Left cardiac atrium (tissue), 4 donors: ENCODE measurements at regions of chr3 and their contacts with region 1.

Region 1: DNA sequence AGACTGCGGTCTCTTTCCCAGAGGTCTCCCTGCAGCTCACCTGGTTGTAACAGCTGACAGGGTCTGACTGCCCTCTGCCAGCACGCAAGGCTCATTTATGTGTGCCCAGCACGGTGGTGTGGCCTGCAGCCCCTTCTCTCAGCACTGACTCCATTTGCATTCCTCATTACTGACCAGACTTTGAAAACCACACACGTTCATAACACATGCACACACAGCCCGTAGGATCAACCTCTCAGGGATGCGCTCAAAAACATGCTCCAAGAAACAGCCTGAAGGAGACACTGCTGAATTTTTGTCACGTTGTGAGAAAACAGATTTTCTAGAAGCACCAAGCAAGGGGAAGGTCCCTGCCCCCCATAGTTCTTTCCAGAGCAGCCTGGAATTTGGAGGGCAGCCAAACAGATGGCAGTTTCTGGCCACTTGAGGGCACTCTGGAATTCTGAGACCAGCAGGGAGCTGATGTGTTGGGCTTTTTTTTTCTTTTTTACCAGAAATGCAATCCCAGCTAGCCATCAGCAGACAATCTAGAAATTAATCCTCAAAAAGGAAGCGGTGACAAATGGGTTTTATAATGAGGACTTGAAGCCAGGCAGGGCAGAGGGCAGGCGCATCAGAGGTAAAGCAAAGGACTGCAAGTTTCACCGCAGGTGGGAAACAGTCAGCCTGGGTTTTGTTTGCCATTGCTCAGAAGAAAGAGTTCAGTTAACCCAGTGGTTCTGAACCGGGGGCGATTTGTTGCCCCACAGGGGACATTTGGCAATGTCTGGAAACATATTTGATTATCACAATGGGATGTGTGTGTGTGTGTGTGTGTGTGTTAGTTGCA is 170.5 kb upstream of the PROK2 start:
- DNase-seq: peak; percentile 76
- ATAC-seq: peak; percentile 79 to 81

Region 2: DNA sequence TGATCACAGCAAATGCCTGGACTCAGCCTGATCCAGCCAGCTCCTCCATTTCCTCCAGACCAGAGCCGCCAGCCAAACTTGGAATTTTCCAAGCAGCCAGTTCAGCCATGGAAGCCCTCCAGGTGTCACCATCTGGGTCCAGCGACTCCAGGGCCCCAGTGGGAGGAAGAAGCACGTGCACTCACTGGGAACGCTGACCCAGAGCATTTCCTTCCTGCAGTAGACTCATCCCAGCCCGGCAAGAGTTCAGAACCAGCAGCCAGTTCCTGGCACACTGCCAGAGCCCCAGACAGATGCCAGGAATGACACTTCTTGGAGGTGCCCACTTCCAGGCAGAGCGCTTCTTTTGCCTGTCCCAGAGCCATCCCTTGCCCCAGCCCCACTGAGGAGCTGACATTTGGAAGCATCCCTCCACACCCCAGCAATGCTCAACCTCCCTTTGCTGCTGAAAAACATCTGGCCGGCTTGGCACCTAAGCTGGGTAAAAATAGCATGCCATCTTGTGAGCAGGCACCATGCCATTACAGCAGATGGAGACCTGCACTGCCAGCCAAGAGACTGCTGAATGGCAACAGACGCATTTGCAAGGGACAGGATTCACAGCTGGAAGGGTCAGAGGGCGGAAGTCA is 289.8 kb after region 1 on chr3:
- intact Hi-C with region 1: loop called in 1 of 2 experiments (anchors 10 kb)
- DNase-seq: peak; percentile 68
- ATAC-seq: peak; percentile 68 to 88

Region 3: DNA sequence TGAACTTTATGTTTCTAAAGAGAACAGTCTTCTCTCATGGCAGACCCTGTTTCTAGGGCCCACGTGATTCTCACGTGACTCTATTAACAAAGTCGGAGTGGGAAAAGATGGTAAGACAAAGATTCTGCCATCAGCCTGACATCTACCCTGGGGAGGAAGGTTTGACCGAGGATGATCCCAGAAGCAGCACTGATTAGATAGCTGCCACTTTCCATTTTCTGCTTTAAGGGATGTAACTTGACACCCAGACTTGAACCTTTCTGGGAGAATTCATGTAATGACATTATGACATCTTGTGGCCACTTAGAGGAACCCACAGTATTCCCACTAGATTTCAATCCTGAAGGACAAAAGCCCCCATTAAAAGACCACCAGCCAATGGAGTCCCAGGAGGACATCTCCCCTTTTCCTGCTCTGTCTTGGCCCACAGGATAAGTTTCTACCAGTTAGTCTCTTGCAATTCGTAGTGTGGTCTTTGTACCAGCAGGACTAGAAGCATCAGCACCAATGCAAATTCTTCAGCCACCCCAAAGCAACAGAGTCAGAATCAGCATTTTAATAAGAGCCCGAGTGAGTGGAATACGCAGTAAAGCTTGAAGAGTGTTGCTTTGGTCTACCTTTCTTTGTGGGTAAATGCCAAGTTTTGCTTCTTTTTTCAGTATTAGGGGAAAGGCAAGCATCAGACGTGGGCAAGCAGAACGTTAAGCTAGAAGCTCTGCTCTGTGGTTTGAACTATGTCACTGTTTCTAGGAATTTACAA is 310.0 kb after region 1 on chr3:
- intact Hi-C with region 1: loop called in 1 of 2 experiments (anchors 10 kb)
- DNase-seq: no peak
- ATAC-seq: no peak

Region 4: GRCh38 chr3:72368331-72368975 is 413.0 kb after region 1 on chr3:
- intact Hi-C with region 1: no loop called
- DNase-seq: no peak
- ATAC-seq: peak; percentile 47 to 75